CD14-positive monocyte (primary cell): ENCODE measurements at regions of chr1 and their contacts with region 1.

Region 1: GRCh38 chr1:45750298-45751038 is at the start of gene IPP:
- DNase-seq: peak; percentile 99 to 100 (median 99)
- H3K4me3 ChIP-seq: peak within 1 kb of the TSS; percentile 41 to 70 (median 55)
- H3K4me3 Mint-ChIP-seq: peak within 1 kb of the TSS; percentile 89 to 99
- H3K27ac ChIP-seq: peak within 1 kb of the TSS; percentile 91 to 98
- H3K27ac Mint-ChIP-seq: peak within 1 kb of the TSS; percentile 100
- H3K4me1 ChIP-seq: peaks cover 13 to 31% of the 10 kb centered on the region in 2 donors
- H3K4me1 Mint-ChIP-seq: peaks cover 21% of the 10 kb centered on the region
- H3K27me3 ChIP-seq: no peaks in the 10 kb centered on the region
- H3K27me3 Mint-ChIP-seq: no peaks in the 10 kb centered on the region
- CTCF ChIP-seq: no peak
- polyA plus RNA-seq, gene IPP: 0.35 to 1.4 (median 1.4) TPM

Region 2: DNA sequence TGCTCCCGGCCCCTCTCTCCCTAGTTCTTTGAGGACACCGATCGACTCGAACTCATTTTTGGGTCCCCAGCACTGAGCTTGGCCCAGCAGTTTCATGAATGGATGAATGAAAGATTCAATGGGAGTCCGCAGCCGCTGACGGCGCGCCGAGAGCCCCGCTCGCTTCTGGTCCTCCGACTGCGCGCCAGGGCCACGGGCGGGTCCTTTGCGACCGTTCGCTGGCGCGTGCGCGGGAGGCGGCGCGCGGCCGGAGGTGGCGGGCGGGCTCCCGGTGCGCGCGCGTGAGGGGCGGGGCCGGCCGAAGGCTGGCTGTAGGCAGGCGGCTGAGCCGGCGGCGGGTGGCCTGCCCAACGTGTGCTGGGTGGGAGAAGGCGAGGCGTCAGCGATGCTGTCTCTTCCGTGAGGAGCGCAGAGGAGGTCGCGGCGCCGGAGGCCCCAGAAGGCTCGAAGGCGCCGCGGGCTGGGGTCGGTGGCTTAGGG is 52.9 kb after region 1 on chr1 and contains the start of gene MAST2:
- intact Hi-C with region 1: loop called (anchors 2 to 5 kb)
- DNase-seq: peak; percentile 78 to 82 (median 79)
- H3K4me3 ChIP-seq: peak within 1 kb of the TSS; percentile 46 to 81 (median 53)
- H3K4me3 Mint-ChIP-seq: peak within 1 kb of the TSS; percentile 90 to 97
- H3K27ac ChIP-seq: peak within 1 kb of the TSS; percentile 35 to 70
- H3K27ac Mint-ChIP-seq: peak within 1 kb of the TSS; percentile 89 to 98 (median 97)
- H3K4me1 ChIP-seq: peaks cover 23 to 32% of the 10 kb centered on the region in 2 donors
- H3K4me1 Mint-ChIP-seq: peaks cover 32% of the 10 kb centered on the region
- H3K27me3 ChIP-seq: peaks cover 0 to 2% of the 10 kb centered on the region in 2 donors
- H3K27me3 Mint-ChIP-seq: peaks cover 0 to 3% (median 0%) of the 10 kb centered on the region in 3 donors
- CTCF ChIP-seq: no peak
- polyA plus RNA-seq, gene MAST2: 1.0 to 7.2 (median 2.5) TPM

Region 3: GRCh38 chr1:46094474-46095005 is 344.1 kb after region 1 on chr1:
- intact Hi-C with region 1: no loop called
- DNase-seq: no peak
- H3K4me3 ChIP-seq: no peak overlapping the region
- H3K4me3 Mint-ChIP-seq: no peak overlapping the region
- H3K27ac ChIP-seq: no peak overlapping the region
- H3K27ac Mint-ChIP-seq: no peak overlapping the region
- H3K4me1 ChIP-seq: no peaks in the 10 kb centered on the region
- H3K4me1 Mint-ChIP-seq: peaks cover 2% of the 10 kb centered on the region
- H3K27me3 ChIP-seq: no peaks in the 10 kb centered on the region
- H3K27me3 Mint-ChIP-seq: peaks cover 0 to 4% (median 1%) of the 10 kb centered on the region in 3 donors
- CTCF ChIP-seq: no peak